ENCODE measurements at regions of chr3 and their contacts with region 1.

Region 1: DNA sequence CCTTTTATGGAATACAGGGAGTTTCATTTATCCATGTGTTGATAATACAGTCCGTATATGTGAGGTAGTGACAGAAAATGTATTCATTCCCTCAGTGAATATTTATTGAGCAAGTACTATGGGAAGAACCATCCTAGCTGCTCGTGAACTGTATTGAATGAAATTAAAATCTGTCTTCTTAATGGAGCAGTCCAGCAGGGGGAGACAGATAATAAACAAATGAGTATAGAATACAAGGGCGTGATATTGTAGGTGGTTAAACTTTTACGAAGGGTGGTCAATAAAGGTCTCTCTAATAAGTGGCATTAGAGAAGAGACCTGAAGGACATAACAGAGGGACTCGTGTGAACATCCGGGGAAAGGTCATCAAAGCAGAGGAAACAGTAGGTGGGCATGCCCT is 62.7 kb upstream of the OSTN start:
- DNase-seq: no peak
- ATAC-seq: no peak

Region 2: GRCh38 chr3:191388823-191389222 is 252.5 kb after region 1 on chr3:
- intact Hi-C with region 1: loop called in 1 of 2 experiments (anchors 10 kb)
- DNase-seq: no peak
- ATAC-seq: no peak